ENCODE measurements at regions of chr1 and their contacts with region 1.

Region 1: DNA sequence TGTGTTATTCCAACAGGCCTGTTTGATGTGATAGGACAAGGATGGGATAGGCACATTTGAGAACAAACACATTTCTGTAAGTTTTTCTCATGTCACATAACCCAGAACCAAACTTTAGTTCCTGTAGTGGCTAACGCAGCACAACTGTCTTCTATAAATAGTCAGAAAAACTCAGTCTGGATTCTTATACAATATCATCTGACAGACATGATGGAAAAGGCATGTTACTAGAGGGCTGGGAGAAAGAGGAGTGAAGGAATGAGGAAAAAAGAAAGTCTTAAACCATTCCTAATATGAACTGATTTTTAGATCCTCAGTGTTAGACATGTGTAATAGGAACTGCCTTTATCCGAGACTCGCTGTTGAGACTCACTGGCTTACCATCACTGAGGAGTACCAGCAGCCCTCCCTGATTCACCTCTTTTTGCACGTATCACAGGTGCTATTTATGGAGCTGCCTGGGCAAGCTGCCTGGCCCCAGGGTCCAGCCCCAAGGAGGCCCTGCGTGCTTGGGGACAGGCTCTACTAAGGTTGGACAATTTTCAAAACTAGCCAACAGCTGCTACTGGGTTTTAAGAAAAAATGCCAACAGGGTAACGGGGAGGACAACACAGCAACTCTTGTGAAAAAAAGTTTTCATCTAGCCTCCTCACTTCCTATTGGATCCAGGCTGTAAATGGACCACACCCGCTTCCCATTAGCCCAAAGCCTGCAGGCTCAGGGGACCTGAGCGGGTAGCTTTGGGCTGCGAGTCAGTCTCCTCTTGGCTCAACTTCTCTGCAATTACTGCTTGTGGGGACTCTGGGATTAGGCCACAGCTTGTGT is 30.7 kb upstream of the SERBP1 start:
- DNase-seq: peak; percentile 35 to 83
- ATAC-seq: peak; percentile 84 to 86
- H3K4me3 ChIP-seq: peak overlapping the region; percentile 2 to 26 (median 20)
- H3K27ac ChIP-seq: peak overlapping the region; percentile 79 to 83 (median 80)
- H3K4me1 ChIP-seq: peaks cover 35 to 39% of the 10 kb centered on the region in 2 donors
- H3K27me3 ChIP-seq: no peaks in the 10 kb centered on the region
- CTCF ChIP-seq: no peak
- POLR2A ChIP-seq: peak in 1 of 2 donors; percentile 42

Region 2: DNA sequence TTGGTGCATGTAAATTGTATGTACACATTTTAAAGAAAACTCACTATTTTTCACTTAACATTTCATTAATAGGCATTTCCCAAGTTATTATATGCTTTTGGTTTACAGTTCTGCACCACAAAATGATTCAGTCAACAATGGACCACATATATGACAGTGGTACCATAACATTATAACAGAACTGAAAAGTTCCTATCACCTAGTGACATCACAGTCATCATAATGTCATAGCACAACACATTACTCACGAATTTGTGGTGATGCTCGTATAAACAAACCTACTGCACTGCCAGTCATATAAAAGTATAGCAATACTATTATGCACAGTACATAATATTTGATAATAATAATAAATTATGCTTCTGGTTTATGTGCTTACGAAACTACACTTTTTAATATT is 567.2 kb before region 1 on chr1:
- in situ Hi-C with region 1: no loop called
- intact Hi-C with region 1: no loop called
- DNase-seq: no peak
- ATAC-seq: no peak
- H3K4me3 ChIP-seq: no peak overlapping the region
- H3K27ac ChIP-seq: no peak overlapping the region
- H3K4me1 ChIP-seq: no peaks in the 10 kb centered on the region
- H3K27me3 ChIP-seq: no peaks in the 10 kb centered on the region
- CTCF ChIP-seq: no peak
- POLR2A ChIP-seq: no peak

Region 3: GRCh38 chr1:67339623-67340343 is 121.1 kb before region 1 on chr1:
- in situ Hi-C with region 1: no loop called
- intact Hi-C with region 1: loop called (anchors 1 kb)
- DNase-seq: peak; percentile 44 to 53
- ATAC-seq: peak; percentile 92 to 94
- H3K4me3 ChIP-seq: peak overlapping the region; percentile 4 to 27 (median 17)
- H3K27ac ChIP-seq: peak overlapping the region; percentile 88 to 91 (median 90)
- H3K4me1 ChIP-seq: peaks cover 14 to 20% of the 10 kb centered on the region in 2 donors
- H3K27me3 ChIP-seq: no peaks in the 10 kb centered on the region
- CTCF ChIP-seq: no peak
- POLR2A ChIP-seq: peak in 1 of 2 donors; percentile 46

Region 4: DNA sequence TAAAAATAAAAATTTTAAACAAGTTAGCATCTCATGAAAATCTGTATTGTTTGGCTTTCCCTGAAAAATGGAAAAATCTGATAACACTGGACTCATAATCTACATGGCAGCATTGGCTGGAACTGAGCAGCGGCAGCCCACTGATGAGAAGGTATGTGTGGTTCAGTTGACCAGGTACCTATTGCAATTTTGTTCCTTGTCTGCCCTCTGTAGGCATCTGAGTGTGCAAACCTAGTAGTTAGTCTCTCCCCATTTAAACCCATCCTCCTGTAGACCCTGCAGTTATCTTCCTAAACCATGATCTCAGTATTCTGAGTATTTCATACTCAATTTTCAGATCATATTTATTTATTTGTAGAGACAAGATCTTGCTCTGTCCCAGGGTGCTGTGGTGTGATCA is 28.8 kb after region 1 on chr1:
- in situ Hi-C with region 1: no loop called
- intact Hi-C with region 1: no loop called
- DNase-seq: no peak
- ATAC-seq: peak; percentile 90 to 92
- H3K4me3 ChIP-seq: no peak overlapping the region
- H3K27ac ChIP-seq: no peak overlapping the region
- H3K4me1 ChIP-seq: no peaks in the 10 kb centered on the region
- H3K27me3 ChIP-seq: no peaks in the 10 kb centered on the region
- CTCF ChIP-seq: peak; percentile 23 to 54 (median 26)
- POLR2A ChIP-seq: no peak